Activated T-helper 1 cell treated with anti-CD3 and anti-CD28 coated beads, Interleukin-12 subunit alpha, Interleukin-12 subunit beta, Interleukin-2, Interleukin-4 antibody, amounts not matched to agents 30 ng/mL and 10 ng/mL and 1 ng/mL, durations not matched to agents 14 hours and 24 hours and 36 hours (primary cell): ENCODE measurements at regions of chrX and their contacts with region 1.

Region 1: DNA sequence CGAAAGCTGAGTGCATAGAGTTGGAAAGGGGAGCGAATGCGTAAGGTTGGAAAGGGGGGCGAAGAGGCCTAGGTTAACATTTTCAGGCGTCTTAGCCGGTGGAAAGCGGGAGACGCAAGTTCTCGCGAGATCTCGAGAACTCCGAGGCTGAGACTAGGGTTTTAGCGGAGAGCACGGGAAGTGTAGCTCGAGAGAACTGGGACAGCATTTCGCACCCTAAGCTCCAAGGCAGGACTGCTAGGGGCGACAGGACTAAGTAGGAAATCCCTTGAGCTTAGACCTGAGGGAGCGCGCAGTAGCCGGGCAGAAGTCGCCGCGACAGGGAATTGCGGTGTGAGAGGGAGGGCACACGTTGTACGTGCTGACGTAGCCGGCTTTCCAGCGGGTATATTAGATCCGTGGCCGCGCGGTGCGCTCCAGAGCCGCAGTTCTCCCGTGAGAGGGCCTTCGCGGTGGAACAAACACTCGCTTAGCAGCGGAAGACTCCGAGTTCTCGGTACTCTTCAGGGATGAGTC is at the start of gene DDX3X:
- DNase-seq: peak; percentile 81
- H3K4me3 Mint-ChIP-seq: peak within 1 kb of the TSS; percentile 91
- H3K27ac Mint-ChIP-seq: peak within 1 kb of the TSS; percentile 99
- H3K4me1 Mint-ChIP-seq: peaks cover 41% of the 10 kb centered on the region
- H3K27me3 Mint-ChIP-seq: peaks cover 5% of the 10 kb centered on the region
- total RNA-seq, gene DDX3X: 312 and 337 TPM in 2 replicates

Region 2: DNA sequence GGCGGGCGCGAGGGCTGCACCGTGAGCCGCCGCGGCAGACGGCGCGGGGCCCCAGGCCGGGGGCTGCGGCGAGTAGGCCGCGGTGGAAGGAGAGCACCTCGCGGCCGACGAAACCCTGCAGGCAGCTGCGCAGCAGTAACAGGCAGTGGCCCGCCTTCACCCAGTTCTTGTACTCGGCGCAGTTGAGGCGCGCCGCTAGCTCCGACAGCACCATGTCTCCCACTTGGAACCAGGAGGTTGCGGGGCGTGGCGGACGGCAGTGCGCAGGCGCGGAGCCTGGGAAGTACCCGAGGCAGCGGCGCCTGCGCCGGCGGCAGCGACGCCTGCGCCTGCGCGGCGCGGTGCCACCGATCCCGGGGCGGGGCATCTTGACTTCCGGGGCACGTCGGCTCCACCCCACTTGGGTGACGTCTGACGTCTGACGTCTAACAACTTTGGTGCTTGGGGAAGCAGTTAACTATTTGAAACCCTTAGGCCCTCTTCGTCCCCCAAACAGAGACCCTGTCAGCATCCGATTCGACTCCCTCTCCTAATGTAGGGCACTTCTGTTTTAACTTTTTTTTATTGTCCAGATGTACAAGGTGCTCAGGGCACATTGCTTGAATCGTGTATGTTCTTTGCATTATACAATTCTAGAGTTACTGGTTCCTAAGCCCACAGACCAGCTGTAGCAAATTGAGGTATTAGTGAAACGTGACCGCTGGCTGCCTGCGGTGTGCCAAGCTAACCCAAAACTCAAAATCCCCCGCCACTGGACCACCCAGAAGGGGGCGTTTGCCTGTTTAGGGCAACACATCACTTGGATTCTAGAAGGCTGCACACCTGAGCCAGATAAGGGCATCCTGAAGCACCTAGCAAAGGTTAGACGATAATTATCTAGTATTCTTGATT is 686.2 kb before region 1 on chrX and contains the start of gene CXorf38:
- intact Hi-C with region 1: loop called (anchors 5 kb)
- DNase-seq: peak; percentile 85
- H3K4me3 Mint-ChIP-seq: peak within 1 kb of the TSS; percentile 97
- H3K27ac Mint-ChIP-seq: peak within 1 kb of the TSS; percentile 94
- H3K4me1 Mint-ChIP-seq: peaks cover 28% of the 10 kb centered on the region
- H3K27me3 Mint-ChIP-seq: no peaks in the 10 kb centered on the region
- total RNA-seq, gene CXorf38: 15.7 and 16.9 TPM in 2 replicates

Region 3: GRCh38 chrX:41180194-41180908 is 153.5 kb before region 1 on chrX:
- intact Hi-C with region 1: loop called (anchors 5 kb)
- DNase-seq: peak; percentile 11
- H3K4me3 Mint-ChIP-seq: peak overlapping the region; percentile 11
- H3K27ac Mint-ChIP-seq: peak overlapping the region; percentile 73
- H3K4me1 Mint-ChIP-seq: peaks cover 51% of the 10 kb centered on the region
- H3K27me3 Mint-ChIP-seq: no peaks in the 10 kb centered on the region

Region 4: DNA sequence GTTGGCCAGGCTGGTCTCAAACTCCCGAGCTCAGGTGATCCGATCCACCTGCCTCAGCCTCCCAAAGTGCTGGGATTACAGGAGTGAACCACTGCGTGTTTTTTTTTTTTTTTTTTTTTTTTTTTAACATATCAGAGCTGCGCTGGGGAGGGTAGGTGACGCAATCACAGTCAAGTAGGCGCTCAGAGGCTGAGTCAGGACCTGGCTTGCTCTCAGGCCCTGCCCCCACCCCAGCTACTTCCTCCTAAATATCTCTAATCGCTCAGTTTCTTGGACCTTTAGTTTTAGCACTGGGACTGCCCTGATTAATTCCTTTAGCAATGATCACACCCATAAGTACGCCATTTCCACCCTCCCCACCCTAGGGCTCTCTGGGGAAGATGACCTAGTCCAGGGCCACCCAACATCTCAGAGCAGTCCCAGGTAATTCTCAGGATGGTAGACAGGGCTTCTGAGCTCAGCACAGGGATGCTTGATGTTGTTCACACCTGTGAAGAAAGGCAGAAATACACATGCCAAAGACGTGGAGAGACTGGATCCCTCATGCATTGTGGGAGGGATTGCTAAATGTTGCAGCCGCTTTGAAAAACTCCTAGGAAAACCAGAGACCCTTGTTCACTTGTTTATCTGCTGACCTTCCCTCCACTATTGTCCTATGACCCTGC is 50.4 kb after region 1 on chrX:
- intact Hi-C with region 1: loop called (anchors 1 kb)
- DNase-seq: peak; percentile 22
- H3K4me3 Mint-ChIP-seq: peak overlapping the region; percentile 47
- H3K27ac Mint-ChIP-seq: peak overlapping the region; percentile 97
- H3K4me1 Mint-ChIP-seq: peaks cover 16% of the 10 kb centered on the region
- H3K27me3 Mint-ChIP-seq: no peaks in the 10 kb centered on the region

Region 5: DNA sequence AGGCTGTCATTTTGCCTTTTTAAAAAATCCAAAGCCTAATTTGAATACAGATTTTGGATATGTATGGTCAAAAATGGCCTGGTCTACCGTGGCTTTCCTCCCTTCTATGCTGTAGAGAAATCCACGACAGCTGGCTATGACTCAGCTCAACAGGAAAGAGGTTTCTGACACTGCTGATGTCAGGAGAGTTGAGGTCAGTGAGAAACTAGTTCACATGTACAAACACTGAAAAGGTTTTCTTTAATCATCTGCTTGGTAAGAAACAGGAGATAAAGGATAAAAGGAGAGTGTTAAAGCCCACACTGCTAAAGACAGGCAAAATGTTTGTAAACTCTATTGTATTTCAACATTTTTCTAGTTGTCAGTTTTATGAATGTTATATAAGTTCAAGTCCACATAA is 227.2 kb after region 1 on chrX:
- intact Hi-C with region 1: loop called (anchors 2 kb)
- DNase-seq: peak; percentile 25
- H3K4me3 Mint-ChIP-seq: peak overlapping the region; percentile 56
- H3K27ac Mint-ChIP-seq: peak overlapping the region; percentile 80
- H3K4me1 Mint-ChIP-seq: peaks cover 57% of the 10 kb centered on the region
- H3K27me3 Mint-ChIP-seq: no peaks in the 10 kb centered on the region

Region 6: DNA sequence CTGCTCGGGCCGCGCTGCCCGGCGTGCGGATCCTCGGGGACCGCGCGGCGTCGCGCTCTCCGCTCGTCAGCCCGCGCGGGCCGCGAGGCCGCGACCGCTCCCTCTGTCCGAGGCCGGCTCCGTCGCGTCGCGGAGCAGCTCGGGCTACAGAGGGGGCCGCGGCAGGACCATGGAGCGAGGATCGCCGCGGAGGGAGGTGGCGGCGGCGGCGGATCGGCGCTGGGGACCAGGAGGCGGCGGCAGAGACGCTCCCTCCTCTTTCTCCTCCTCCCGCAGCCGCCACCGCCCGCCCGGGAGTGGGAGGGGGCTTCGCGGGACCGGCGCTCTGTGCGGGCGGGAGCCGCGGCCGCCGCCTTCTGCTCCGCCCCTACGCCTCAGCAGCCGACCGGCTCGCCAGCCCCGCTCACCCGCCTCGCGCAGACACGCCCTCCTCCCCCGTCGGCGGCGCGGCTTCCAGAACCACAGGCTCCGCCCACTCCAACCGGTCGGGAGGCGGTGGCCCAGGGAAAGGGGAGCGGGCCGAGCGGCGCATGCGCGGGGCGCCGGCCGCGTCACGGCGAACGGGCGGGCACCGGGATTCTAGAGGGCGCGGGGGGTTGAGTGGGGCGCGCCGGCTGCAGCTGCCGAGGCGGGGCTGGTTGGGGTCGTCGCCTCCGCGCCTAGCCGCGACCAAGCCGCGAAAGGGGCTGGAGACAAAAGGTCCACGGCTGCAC is 589.6 kb after region 1 on chrX and contains the start of gene CASK:
- intact Hi-C with region 1: loop called (anchors 2 kb)
- DNase-seq: peak; percentile 88
- H3K4me3 Mint-ChIP-seq: peak within 1 kb of the TSS; percentile 95
- H3K27ac Mint-ChIP-seq: peak within 1 kb of the TSS; percentile 90
- H3K4me1 Mint-ChIP-seq: peaks cover 33% of the 10 kb centered on the region
- H3K27me3 Mint-ChIP-seq: peaks cover 5% of the 10 kb centered on the region
- total RNA-seq, gene CASK: 17.4 and 30.5 TPM in 2 replicates